Activated T-helper 1 cell treated with anti-CD3 and anti-CD28 coated beads, Interleukin-12 subunit alpha, Interleukin-12 subunit beta, Interleukin-2, Interleukin-4 antibody, amounts not matched to agents 30 ng/mL and 10 ng/mL and 1 ng/mL, durations not matched to agents 14 hours and 24 hours and 36 hours (primary cell): ENCODE measurements at regions of chr19 and their contacts with region 1.

Region 1: DNA sequence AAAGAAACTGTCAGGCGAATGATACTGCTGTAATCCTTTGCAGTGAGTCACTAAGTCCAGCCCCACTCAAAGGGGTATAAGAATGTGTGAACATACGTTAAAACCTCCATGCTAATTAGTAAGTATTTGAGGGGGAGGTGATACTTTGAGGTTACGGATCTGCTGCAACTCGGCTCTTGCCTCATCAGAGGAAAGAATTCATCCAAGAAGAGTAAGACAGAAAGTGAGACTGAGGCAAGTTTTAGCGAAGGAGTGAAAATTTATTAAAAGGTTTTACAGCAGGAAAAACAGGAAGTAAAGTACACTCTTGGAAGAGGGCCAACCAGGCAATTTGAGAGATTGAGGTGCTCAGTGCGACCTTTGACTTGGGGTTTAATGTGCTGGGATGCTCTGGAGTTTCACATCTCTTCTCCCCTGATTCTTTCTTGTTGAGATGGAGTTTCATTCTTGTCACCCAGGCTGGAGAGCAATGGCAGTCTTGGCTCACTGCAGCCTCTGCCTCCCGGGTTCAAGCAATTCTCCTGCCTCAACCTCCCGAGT is 9.8 kb downstream of the CLEC4M start:
- DNase-seq: no peak
- H3K4me3 Mint-ChIP-seq: peak overlapping the region; percentile 8
- H3K27ac Mint-ChIP-seq: peak overlapping the region; percentile 61
- H3K4me1 Mint-ChIP-seq: peaks cover 13% of the 10 kb centered on the region
- H3K27me3 Mint-ChIP-seq: peaks cover 19% of the 10 kb centered on the region

Region 2: DNA sequence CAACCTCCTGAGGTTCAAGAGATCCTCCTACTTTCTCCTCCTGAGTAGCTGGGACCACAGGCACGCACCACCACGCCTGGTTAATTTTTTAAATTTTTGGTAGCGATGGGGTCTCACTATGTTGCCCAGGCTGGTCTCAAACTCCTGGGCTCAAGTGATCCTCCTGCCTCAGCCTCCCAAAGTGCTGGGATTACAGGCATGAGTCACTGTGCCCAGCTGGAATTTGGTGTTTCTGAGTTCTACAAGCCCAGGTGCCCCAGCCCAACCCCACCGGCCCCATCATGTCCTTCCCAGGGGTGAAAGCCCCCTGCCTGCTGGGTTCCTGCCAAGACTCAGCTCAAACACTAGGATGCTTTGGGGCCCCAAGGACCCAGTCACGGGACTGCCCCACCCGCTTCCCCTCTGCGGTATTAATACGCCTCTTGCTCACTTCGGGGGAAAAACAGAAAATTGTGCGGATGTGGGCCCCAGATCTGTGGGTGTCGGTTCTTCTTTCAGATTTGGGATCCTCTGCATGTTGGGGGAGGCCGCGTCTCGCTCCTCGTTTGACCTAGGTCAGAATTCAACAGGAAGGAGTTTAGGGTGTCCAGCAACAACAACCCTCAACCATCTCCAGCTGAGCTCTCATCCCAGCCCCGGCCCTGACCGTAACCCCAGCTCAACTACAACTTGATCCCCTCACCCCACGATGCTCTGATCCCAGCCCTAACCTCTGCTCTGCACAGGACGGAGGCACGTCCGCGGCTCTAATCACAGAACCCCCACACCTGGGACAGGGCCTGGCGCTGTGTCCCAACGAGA is 67.2 kb before region 1 on chr19:
- intact Hi-C with region 1: loop called (anchors 1 kb)
- DNase-seq: peak; percentile 53
- H3K4me3 Mint-ChIP-seq: peak overlapping the region; percentile 53
- H3K27ac Mint-ChIP-seq: peak overlapping the region; percentile 64
- H3K4me1 Mint-ChIP-seq: peaks cover 18% of the 10 kb centered on the region
- H3K27me3 Mint-ChIP-seq: peaks cover 24% of the 10 kb centered on the region

Region 3: DNA sequence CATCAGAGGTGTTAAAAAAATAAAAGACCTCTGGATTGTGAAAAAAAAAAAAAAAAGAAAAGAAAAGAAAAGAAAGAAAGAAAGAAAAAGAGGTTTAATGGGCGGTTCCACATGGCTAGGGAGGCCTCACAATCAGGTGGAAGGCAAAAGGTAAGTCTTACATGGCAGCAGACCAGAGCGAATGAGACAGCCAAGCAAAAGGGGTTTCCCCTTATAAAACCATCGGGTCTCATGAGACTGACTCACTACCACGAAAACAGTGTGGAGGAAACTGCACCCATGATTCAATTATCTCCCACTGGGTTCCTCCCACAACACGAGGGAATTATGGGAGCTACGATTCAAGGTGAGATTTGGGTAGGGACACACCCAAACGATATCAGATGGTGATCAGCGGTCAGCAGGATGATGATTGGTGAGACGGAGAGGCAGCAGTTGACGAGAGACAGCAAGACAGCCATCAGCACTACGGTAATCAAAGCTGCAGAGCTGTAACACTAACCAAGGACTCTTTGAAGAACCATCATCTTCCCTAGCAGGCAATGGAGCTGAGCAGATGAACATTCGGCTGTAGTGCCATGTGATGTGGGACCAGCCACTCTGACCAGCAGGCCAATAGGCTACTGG is 21.6 kb before region 1 on chr19:
- intact Hi-C with region 1: loop called (anchors 1 kb)
- DNase-seq: no peak
- H3K4me3 Mint-ChIP-seq: no peak overlapping the region
- H3K27ac Mint-ChIP-seq: no peak overlapping the region
- H3K4me1 Mint-ChIP-seq: peaks cover 9% of the 10 kb centered on the region
- H3K27me3 Mint-ChIP-seq: peaks cover 12% of the 10 kb centered on the region

Region 4: GRCh38 chr19:7806876-7807275 is 34.1 kb after region 1 on chr19:
- intact Hi-C with region 1: loop called (anchors 1 kb)
- DNase-seq: no peak
- H3K4me3 Mint-ChIP-seq: no peak overlapping the region
- H3K27ac Mint-ChIP-seq: no peak overlapping the region
- H3K4me1 Mint-ChIP-seq: peaks cover 9% of the 10 kb centered on the region
- H3K27me3 Mint-ChIP-seq: peaks cover 29% of the 10 kb centered on the region